ENCODE measurements at regions of chr17 and their contacts with region 1.

Region 1: DNA sequence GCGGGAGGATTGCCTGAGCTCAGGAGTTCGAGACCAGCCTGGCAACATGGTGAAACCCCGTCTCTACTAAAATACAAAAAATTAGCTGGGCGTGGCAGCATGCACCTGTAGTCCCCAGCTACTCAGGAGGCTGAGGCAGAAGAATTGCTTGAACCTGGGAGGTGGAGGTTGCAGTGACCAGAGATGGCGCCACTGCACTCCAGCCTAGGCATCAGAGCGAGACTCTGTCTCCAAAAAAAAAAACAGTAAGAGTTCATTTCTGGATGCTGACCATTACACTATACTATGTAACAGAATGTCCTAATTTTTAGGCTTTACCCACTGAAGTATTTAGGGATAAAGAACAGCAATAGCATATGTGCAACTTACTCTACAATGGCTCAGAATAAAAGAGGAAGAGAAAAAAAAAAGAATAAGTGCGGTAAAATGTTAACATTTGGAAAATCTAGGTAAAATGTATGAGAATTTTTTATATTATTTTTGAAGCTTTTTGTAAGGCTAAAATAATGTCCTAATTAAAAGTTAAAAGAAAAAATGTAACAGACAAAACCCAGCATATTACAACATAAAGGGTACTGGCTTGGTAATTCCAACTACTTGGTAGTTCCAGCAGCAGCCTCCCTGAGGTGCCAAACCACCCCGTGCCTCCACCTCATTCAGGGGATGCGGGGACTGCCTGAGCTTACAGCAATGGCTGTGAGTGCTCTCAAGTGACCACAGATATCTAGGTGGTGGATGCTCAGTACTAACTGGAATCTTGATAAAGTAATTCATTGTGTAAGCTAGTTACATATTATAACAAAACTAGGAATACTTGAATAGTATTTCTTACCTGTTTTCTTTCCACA is 10.9 kb downstream of the COPS3 start:
- DNase-seq: peak; percentile 44
- ATAC-seq: no peak
- H3K4me3 Mint-ChIP-seq: no peak overlapping the region
- H3K27ac Mint-ChIP-seq: no peak overlapping the region
- H3K4me1 Mint-ChIP-seq: peaks cover 2% of the 10 kb centered on the region
- H3K27me3 Mint-ChIP-seq: no peaks in the 10 kb centered on the region

Region 2: GRCh38 chr17:17108451-17109049 is 161.6 kb before region 1 on chr17:
- CTCF ChIA-PET with region 1: no interaction called
- POLR2A ChIA-PET with region 1: no interaction called
- DNase-seq: no peak
- ATAC-seq: no peak
- H3K4me3 Mint-ChIP-seq: no peak overlapping the region
- H3K27ac Mint-ChIP-seq: no peak overlapping the region
- H3K4me1 Mint-ChIP-seq: peaks cover 48% of the 10 kb centered on the region
- H3K27me3 Mint-ChIP-seq: no peaks in the 10 kb centered on the region

Region 3: DNA sequence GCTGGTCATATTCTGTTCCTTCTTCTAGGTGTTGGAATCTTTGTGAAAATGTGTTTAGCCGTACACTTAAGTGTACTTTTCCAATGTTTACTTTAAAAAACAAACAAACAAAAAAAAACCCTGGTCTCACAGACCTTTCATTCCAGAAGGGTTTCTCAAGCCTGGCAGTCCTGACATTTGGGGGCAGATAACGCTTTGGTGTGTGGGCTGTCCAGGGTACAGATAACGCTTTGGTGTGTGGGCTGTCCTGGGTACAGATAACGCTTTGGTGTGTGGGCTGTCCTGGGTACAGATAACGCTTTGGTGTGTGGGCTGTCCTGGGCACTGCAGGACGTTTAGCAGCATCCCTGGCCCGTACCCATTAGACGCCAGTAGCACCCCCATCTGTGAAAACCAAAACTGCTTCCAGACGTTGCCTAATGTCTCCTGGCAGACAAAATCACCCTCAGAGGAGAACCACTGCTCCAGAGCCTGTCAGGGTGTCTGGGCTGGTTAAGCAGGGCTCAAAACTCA is 17.9 kb before region 1 on chr17:
- CTCF ChIA-PET with region 1: interaction called, 10 read pairs
- POLR2A ChIA-PET with region 1: no interaction called
- DNase-seq: no peak
- ATAC-seq: no peak
- H3K4me3 Mint-ChIP-seq: no peak overlapping the region
- H3K27ac Mint-ChIP-seq: no peak overlapping the region
- H3K4me1 Mint-ChIP-seq: no peaks in the 10 kb centered on the region
- H3K27me3 Mint-ChIP-seq: no peaks in the 10 kb centered on the region